SK-N-SH (cell line): ENCODE measurements at regions of chr17 and their contacts with region 1.

Region 1: DNA sequence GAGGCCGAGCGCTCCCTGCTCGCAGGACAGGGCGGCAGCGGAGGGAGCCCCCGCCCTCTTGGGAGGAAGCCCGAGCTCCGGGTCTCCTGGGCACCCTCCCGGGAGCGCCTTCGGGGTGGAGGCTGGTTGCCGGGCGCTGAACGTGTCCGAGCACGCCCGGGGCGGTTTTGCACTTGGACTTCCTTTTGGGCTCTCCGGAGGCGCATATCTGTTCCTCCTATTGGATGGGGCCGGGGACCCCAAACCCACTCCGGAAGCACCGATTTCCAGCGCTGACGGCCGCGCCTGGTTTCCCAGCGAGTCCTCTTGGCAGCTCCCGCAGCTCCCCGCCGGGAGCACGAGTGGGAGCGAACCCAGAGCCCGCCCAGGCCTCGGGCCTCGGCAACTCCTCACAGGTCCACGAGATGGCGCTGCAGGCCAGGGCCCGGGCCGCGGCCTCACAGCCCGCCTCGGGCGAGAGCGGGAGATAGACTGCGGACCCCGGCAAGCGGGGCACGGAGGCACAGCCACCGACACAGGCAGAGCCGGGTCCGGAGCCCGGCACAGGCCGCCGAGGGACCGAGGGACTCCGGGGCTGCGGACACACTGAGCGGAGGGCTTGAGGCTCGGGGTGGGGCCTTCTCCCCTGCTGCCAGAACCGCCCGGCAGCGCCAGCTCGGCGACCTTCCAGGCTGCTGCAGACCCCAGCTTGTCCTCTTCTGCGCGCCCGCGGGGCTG is 12.7 kb downstream of the TBX2 start:
- DNase-seq: peak; percentile 99
- H3K4me3 ChIP-seq: peak overlapping the region; percentile 77 to 82
- H3K27ac ChIP-seq: peak overlapping the region; percentile 80 to 90
- H3K4me1 ChIP-seq: peaks cover 5 to 51% of the 10 kb centered on the region in 2 experiments; a peak in 2 of 4 replicates
- H3K27me3 ChIP-seq: no peaks in the 10 kb centered on the region
- CTCF ChIP-seq: peak; percentile 98
- EP300 ChIP-seq: no peak; a peak in 1 of 4 replicates
- RAD21 ChIP-seq: peak; percentile 96

Region 2: GRCh38 chr17:60720763-60721531 is 691.4 kb before region 1 on chr17:
- CTCF ChIA-PET with region 1: interaction called, 27 read pairs
- POLR2A ChIA-PET with region 1: interaction called, 3 read pairs
- DNase-seq: peak; percentile 66
- H3K4me3 ChIP-seq: peak overlapping the region in 1 of 2 experiments; percentile 25; a peak in 2 of 4 replicates
- H3K27ac ChIP-seq: peak overlapping the region; percentile 8 to 51; a peak in 2 of 4 replicates
- H3K4me1 ChIP-seq: peaks cover 0 to 5% of the 10 kb centered on the region in 2 experiments; a peak in 2 of 4 replicates
- H3K27me3 ChIP-seq: no peaks in the 10 kb centered on the region
- CTCF ChIP-seq: peak; percentile 100
- EP300 ChIP-seq: no peak
- RAD21 ChIP-seq: peak; percentile 98

Region 3: DNA sequence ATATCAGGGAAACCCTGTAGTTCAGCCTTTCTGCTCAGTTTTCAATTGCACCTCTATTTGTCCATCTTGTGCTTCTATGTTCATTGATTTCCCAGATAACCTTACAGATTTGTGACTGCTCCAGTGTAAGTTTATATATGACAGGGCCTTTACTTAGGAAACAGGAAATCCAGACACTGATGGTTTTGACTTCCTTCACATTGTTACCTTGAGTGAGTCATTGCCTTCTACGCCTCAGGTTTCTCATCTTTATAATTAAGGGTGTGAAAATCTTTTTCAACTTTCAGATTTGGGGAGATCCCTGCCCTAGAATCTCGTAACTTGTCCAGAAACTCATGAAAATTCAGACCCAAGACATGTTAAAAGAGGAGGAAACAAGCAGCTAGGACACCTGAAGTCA is 355.0 kb before region 1 on chr17:
- CTCF ChIA-PET with region 1: no interaction called
- POLR2A ChIA-PET with region 1: no interaction called
- DNase-seq: no peak
- H3K4me3 ChIP-seq: no peak overlapping the region
- H3K27ac ChIP-seq: no peak overlapping the region
- H3K4me1 ChIP-seq: peaks cover 0 to 2% of the 10 kb centered on the region in 2 experiments; a peak in 2 of 4 replicates
- H3K27me3 ChIP-seq: no peaks in the 10 kb centered on the region
- CTCF ChIP-seq: no peak
- EP300 ChIP-seq: no peak
- RAD21 ChIP-seq: no peak

Region 4: DNA sequence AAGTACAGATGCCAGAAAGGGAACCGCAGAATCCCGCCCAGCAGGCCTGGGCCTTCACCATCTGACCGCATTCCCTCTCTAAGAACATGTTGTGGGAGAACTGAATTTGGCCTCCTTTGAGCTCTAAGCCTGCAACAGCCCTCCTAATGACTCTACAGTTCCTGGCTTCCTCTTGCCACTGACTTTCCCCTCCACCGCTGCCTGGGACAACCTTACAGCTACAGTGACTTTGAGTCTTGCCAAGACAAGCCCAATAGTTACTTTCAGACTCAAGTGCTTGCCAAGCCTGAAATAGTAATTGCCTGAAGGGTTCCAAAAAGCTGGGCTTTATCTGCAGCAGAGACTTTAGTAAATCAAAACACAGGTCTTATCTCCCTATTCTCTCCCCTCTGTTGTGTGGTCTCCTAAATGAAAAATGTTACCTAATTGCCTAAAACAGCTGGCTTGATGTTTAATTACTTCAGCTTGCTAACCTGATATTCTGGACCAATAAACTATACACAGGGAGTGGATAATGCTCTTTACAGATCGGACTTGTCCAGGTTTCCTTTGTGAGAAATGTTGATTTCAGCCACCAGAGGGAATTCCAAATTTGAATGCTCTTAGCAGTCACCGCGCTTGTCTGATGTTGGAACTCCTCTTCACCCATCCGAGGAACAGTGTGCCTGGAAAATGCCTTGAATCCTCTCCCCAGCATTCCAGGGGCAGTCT is 97.8 kb before region 1 on chr17:
- CTCF ChIA-PET with region 1: interaction called, 13 read pairs
- POLR2A ChIA-PET with region 1: no interaction called
- DNase-seq: peak; percentile 69
- H3K4me3 ChIP-seq: no peak overlapping the region
- H3K27ac ChIP-seq: peak overlapping the region; percentile 60 to 74
- H3K4me1 ChIP-seq: peaks cover 27 to 37% of the 10 kb centered on the region in 2 experiments
- H3K27me3 ChIP-seq: no peaks in the 10 kb centered on the region
- CTCF ChIP-seq: peak; percentile 52
- EP300 ChIP-seq: peak in 1 of 2 experiments; percentile 86; a peak in 2 of 4 replicates
- RAD21 ChIP-seq: peak; percentile 53

Region 5: DNA sequence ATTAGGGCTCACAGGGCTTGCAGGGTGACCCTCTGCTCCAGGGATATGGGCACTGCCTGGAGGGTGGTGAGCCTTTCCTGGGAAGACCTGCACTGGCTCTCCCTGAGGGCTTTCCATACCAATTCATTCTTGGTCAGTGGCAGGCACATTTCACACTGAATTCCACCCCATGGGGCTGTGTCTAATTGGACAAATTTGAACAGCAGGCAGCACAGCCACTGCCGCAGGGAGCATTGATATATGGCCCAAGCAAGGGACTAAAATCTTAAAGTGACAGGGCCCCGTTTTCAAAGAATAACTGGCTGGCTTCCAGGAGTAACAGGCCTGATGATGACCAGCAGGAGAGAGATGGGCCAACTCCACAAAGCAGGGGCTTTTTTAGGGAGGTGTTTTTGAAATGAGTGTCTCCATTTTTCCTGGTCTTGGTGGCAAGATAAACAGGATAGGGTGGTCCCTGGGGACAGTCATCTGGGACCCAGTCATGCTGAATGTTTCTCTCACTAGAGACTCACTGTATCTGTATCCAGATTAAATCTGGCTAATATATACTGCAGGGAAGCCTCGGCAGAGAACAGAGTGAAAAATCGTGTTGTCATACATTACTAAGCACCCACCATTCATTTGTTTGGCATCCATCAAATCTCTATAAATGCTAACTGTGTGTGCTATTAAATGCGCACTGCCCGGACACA is 86.8 kb before region 1 on chr17:
- CTCF ChIA-PET with region 1: no interaction called
- POLR2A ChIA-PET with region 1: no interaction called
- DNase-seq: peak; percentile 78
- H3K4me3 ChIP-seq: 0 out of 4 replicates have a peak overlapping the region, but pooled peaks of 1 of the 2 experiments have one; percentile 4
- H3K27ac ChIP-seq: peak overlapping the region; percentile 75 to 86
- H3K4me1 ChIP-seq: peaks cover 25 to 38% of the 10 kb centered on the region in 2 experiments
- H3K27me3 ChIP-seq: no peaks in the 10 kb centered on the region
- CTCF ChIP-seq: no peak; the same call in 1 of the 2 replicates
- EP300 ChIP-seq: peak; percentile 42 to 78
- RAD21 ChIP-seq: peak; percentile 16; the same call in 1 of the 2 replicates

Region 6: GRCh38 chr17:61345061-61345460 is 67.2 kb before region 1 on chr17:
- CTCF ChIA-PET with region 1: no interaction called
- POLR2A ChIA-PET with region 1: no interaction called
- DNase-seq: no peak
- H3K4me3 ChIP-seq: no peak overlapping the region
- H3K27ac ChIP-seq: no peak overlapping the region
- H3K4me1 ChIP-seq: peaks cover 0 to 3% of the 10 kb centered on the region in 2 experiments; a peak in 1 of 4 replicates
- H3K27me3 ChIP-seq: no peaks in the 10 kb centered on the region
- CTCF ChIP-seq: no peak
- EP300 ChIP-seq: no peak
- RAD21 ChIP-seq: no peak

Region 7: DNA sequence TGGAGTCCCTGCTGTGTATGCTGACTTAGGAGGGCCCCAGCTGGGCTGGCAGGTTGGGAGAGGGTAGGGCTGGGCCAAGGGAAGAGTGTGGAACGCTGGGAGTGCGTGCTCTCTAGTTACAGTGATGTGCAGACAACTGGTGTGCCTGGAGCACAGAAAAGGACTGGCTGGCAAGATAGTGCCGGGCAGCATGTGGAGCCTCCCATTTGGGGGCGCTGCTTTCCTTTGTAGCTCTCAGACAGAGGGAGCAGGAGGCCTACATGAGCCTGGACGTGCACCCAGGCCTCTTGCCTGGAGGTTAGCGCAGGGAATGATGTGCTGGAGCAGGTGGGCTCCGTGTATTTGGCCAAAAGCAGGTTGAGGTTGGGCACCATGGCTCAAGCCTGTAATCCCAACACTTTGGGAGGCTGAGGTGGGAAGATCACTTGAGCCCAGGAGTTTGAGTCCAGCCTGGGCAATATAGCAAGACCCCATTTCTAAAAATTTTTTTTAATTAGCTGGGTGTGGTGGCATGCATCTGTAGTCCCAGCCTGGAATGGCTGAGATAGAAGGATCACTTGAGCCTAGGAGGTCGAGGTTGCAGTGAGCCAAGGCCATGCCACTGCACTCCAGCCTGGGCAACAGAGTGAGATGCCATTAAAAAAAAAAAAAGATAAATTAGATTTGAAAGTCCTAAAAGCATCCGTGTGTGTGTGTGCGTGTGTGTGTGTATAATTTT is 13.9 kb after region 1 on chr17:
- CTCF ChIA-PET with region 1: interaction called, 53 read pairs
- POLR2A ChIA-PET with region 1: no interaction called
- DNase-seq: peak; percentile 42
- H3K4me3 ChIP-seq: no peak overlapping the region
- H3K27ac ChIP-seq: no peak overlapping the region; a peak in 1 of 4 replicates
- H3K4me1 ChIP-seq: peaks cover 0 to 4% of the 10 kb centered on the region in 2 experiments; a peak in 1 of 4 replicates
- H3K27me3 ChIP-seq: no peaks in the 10 kb centered on the region
- CTCF ChIP-seq: no peak; the same call in 1 of the 2 replicates
- EP300 ChIP-seq: no peak
- RAD21 ChIP-seq: peak; percentile 63

Region 8: DNA sequence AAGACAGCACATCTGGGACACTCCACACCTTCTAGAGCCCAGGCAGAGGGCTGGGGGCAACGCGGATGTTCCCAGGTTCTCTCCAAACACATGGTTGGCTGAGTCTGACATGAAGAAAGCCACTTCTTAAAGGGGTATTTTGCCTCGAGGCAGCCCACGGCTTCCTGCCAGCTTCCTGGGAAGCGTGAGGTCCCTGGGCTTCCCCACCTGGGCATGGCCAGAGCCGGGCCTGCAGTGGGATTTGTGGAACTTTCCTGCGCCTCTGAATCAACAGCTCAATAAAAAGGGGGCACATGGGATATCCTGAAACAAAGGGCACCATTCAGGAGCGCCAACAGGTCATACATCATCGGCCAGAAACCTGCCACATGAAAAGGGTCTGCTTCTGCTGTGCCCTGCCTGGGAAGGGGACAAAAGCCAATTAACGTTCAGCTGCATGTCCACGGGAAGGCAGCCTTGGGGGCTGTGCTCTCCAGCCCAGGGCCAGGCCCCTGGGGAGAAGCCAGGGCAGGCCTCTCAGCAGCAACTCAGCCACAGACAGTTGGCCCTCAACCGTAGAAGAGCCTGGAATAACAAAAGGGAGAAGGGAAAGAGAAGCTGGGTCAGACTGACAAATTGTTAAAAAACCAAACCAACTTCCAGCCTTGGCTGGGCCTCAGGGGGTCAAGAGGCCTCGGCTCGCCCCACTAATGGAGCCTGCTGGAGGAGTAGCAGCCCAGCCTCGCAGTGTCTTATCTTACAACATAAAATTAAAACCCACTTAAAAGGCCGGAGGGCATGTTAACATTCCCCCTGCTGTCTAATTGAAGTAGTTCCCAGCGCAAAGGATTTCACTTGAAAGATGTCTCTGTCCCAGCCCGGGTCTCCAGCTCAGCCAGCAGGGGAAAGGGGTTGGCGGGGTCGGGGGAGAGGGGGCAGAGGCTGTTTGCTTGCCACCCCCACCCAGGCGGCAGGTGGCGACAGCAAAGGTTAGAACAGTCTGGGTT is 74.1 kb after region 1 on chr17:
- CTCF ChIA-PET with region 1: interaction called, 19 read pairs
- POLR2A ChIA-PET with region 1: no interaction called
- DNase-seq: peak; percentile 80
- H3K4me3 ChIP-seq: no peak overlapping the region
- H3K27ac ChIP-seq: peak overlapping the region in 1 of 2 experiments; percentile 45; a peak in 2 of 4 replicates
- H3K4me1 ChIP-seq: peaks cover 0 to 48% of the 10 kb centered on the region in 2 experiments; a peak in 2 of 4 replicates
- H3K27me3 ChIP-seq: no peaks in the 10 kb centered on the region
- CTCF ChIP-seq: no peak
- EP300 ChIP-seq: 0 out of 4 replicates have a peak, but pooled peaks of 1 of the 2 experiments have one; percentile 25
- RAD21 ChIP-seq: no peak

Region 9: DNA sequence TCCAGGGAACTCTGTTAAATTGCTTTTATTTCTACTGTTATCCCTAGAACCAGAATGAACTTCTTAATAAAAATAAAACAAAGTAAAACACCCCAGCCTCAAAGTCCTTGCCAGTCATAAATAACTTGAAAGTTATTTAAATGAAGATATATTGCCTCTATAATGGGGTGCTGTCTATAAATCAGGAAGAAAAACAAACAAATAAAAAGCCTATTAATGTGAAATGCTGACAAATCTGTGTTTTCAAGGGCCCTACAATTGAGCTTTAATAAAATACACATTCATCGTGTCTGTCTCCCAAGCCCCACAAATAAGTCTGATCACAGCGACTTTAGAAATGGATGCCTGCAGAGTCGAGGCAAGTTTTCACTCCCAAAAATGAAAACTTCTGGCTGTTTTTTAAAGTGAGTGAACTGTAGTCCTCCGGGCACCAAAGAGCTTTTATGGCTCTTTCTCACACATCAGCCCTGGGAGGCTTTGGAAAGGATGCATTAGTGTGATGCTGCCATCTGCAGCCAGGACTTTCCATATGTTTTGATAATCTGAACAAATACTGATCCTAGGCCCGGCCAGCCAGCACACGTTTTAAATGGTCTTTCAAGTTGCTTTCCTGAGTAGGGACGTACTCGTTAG is 162.4 kb after region 1 on chr17:
- CTCF ChIA-PET with region 1: interaction called, 318 read pairs
- POLR2A ChIA-PET with region 1: interaction called, 12 read pairs
- DNase-seq: peak; percentile 76
- H3K4me3 ChIP-seq: no peak overlapping the region
- H3K27ac ChIP-seq: peak overlapping the region; percentile 7 to 56; a peak in 3 of 4 replicates
- H3K4me1 ChIP-seq: peaks cover 0 to 7% of the 10 kb centered on the region in 2 experiments; a peak in 2 of 4 replicates
- H3K27me3 ChIP-seq: no peaks in the 10 kb centered on the region
- CTCF ChIP-seq: peak; percentile 59
- EP300 ChIP-seq: no peak
- RAD21 ChIP-seq: peak; percentile 97